Keratinocyte (primary cell): ENCODE measurements at regions of chr10 and their contacts with region 1.

Region 1: GRCh38 chr10:118669020-118669791 is 73.8 kb upstream of the PRLHR start:
- DNase-seq: no peak
- H3K4me3 ChIP-seq: no peak overlapping the region
- H3K27ac ChIP-seq: no peak overlapping the region
- H3K4me1 ChIP-seq: no peaks in the 10 kb centered on the region
- H3K27me3 ChIP-seq: peaks cover 2% of the 10 kb centered on the region
- CTCF ChIP-seq: no peak

Region 2: GRCh38 chr10:118594392-118595063 is 74.7 kb before region 1 on chr10:
- dilution Hi-C with region 1: loop called (anchors 10 kb)
- DNase-seq: no peak
- H3K4me3 ChIP-seq: no peak overlapping the region
- H3K27ac ChIP-seq: no peak overlapping the region
- H3K4me1 ChIP-seq: peaks cover 2% of the 10 kb centered on the region
- H3K27me3 ChIP-seq: peaks cover 59% of the 10 kb centered on the region
- CTCF ChIP-seq: peak in 1 of 3 experiments; percentile 43